Activated CD8-positive, alpha-beta T cell treated with anti-CD3 and anti-CD28 coated beads for 36 hours (primary cell): ENCODE measurements at regions of chr6 and their contacts with region 1.

Region 1: DNA sequence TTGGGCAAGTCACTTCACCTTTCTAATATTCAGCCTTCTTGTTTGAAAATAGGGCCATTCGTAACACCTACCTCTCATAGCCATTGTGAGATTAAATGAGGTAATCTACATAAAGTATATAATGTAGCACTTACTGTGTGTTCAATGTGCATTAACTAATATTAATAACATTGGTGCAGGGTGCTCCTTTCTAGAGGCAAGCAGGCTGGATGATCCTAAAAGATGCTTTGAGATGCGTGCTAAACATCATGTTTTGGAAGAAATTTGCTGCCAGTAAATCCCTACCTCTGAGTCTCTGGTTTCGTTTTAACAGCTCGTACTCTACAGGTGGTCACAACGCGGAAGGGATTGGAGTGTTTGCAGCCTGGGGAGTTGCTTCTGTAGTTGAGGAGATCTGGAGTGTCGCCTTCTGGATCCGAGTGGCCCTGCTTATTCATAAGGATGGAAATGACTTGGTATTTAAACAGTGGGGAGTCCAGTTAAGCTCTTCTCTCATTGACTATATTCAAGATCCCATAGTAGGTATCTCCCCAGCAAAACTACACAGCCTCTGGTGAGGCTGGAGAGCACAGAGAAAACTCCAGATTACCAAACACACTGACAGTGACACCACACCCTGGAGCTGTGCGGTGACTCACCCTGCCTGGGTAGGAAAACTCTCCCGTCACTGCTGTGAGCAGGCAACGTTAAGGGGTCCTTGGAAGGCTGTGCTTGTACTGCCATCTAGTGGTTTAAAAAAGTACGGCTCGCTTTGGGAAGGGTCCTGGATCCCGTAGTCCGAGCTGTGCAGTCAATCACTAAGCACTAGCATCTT is 107.9 kb downstream of the MAP3K7 start:
- DNase-seq: peak; percentile 90
- ATAC-seq: peak; percentile 90
- H3K4me3 Mint-ChIP-seq: no peak overlapping the region
- H3K27ac Mint-ChIP-seq: peak overlapping the region; percentile 66
- H3K4me1 Mint-ChIP-seq: peaks cover 52% of the 10 kb centered on the region
- H3K27me3 Mint-ChIP-seq: no peaks in the 10 kb centered on the region
- CTCF ChIP-seq: peak; percentile 97

Region 2: GRCh38 chr6:90296346-90297114 is 182.5 kb before region 1 on chr6 and contains the start of gene BACH2:
- CTCF ChIA-PET with region 1: interaction called, 231 read pairs
- POLR2A ChIA-PET with region 1: interaction called, 8 read pairs
- intact Hi-C with region 1: no loop called
- DNase-seq: peak; percentile 99
- ATAC-seq: peak; percentile 69
- H3K4me3 Mint-ChIP-seq: peak within 1 kb of the TSS; percentile 83
- H3K27ac Mint-ChIP-seq: peak within 1 kb of the TSS; percentile 94
- H3K4me1 Mint-ChIP-seq: peaks cover 38% of the 10 kb centered on the region
- H3K27me3 Mint-ChIP-seq: peaks cover 3% of the 10 kb centered on the region
- CTCF ChIP-seq: no peak
- total RNA-seq, gene BACH2: 60.7 to 66.9 TPM

Region 3: GRCh38 chr6:90386399-90387382 is 92.3 kb before region 1 on chr6:
- CTCF ChIA-PET with region 1: interaction called, 24 read pairs
- POLR2A ChIA-PET with region 1: interaction called, 5 read pairs
- intact Hi-C with region 1: no loop called
- DNase-seq: no peak
- ATAC-seq: no peak
- H3K4me3 Mint-ChIP-seq: no peak overlapping the region
- H3K27ac Mint-ChIP-seq: no peak overlapping the region
- H3K4me1 Mint-ChIP-seq: peaks cover 45% of the 10 kb centered on the region
- H3K27me3 Mint-ChIP-seq: no peaks in the 10 kb centered on the region
- CTCF ChIP-seq: no peak

Region 4: GRCh38 chr6:90413867-90414266 is 65.1 kb before region 1 on chr6:
- CTCF ChIA-PET with region 1: interaction called, 25 read pairs
- POLR2A ChIA-PET with region 1: interaction called, 10 read pairs
- intact Hi-C with region 1: no loop called
- DNase-seq: peak; percentile 95
- ATAC-seq: peak; percentile 77
- H3K4me3 Mint-ChIP-seq: peak overlapping the region; percentile 60
- H3K27ac Mint-ChIP-seq: peak overlapping the region; percentile 95
- H3K4me1 Mint-ChIP-seq: peaks cover 61% of the 10 kb centered on the region
- H3K27me3 Mint-ChIP-seq: no peaks in the 10 kb centered on the region
- CTCF ChIP-seq: no peak

Region 5: DNA sequence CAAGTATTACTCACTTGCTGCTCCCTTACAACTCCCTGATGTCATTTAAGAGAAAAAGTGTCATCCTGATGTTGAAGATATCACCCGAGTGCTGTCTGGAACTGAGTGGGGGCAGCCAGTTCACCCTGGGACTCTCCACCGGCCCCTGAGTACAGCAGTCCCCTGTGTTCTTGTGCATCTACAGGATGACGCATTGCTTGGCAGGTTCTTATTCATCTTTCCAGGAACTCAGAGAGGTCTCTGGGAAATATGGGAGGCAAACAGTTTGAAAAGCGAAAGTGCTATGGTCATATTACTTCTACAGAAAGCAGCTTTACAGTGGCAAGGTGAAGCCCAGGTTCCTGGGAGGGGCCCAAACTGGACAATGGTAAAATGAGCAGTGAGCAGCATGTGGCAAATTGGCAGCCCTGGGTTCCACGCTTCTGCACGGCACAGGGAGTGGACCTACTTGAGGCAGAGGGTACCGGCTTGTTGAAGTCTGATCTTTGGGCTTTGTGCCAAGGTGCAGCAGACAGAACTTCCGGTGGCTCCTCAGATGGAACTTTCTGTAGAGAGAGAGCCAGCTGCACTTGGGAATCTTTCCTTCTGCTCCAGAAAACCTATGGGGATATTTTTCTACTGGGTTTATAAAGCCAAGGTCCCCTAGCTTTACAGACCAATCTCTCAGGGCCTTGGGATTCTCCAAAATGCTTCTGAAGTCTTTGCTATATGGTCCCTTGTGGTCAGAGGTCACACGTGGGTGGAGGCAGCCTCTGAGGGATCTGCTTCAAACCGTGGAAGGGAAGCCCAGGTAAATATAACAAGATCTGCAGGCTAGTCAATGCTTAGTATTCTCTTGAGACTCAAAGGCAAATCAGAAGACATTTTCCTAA is 20.4 kb before region 1 on chr6:
- CTCF ChIA-PET with region 1: interaction called, 12 read pairs
- POLR2A ChIA-PET with region 1: interaction called, 22 read pairs
- intact Hi-C with region 1: no loop called
- DNase-seq: peak; percentile 93
- ATAC-seq: peak; percentile 95
- H3K4me3 Mint-ChIP-seq: peak overlapping the region; percentile 31
- H3K27ac Mint-ChIP-seq: peak overlapping the region; percentile 93
- H3K4me1 Mint-ChIP-seq: peaks cover 74% of the 10 kb centered on the region
- H3K27me3 Mint-ChIP-seq: no peaks in the 10 kb centered on the region
- CTCF ChIP-seq: no peak

Region 6: DNA sequence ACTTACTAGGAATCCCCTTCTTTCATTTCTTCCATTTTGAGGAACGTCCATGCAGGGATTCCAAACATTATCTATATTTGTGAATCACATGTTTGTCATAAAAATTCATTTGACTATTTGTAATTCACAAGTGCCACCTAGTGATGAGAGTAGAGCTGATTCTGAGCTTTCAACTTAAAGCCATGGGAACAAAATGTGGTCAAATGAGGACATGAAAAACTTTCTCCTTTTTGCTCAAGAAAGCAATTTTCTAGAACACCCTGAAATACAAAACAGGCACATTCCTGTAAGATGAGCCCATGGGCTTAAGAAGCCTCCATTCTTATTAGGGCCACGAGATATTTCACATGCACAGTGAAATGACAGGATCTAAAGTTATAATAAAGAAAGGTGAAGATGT is 95.6 kb after region 1 on chr6:
- CTCF ChIA-PET with region 1: no interaction called
- POLR2A ChIA-PET with region 1: no interaction called
- intact Hi-C with region 1: no loop called
- DNase-seq: no peak
- ATAC-seq: no peak
- H3K4me3 Mint-ChIP-seq: no peak overlapping the region
- H3K27ac Mint-ChIP-seq: no peak overlapping the region
- H3K4me1 Mint-ChIP-seq: peaks cover 19% of the 10 kb centered on the region
- H3K27me3 Mint-ChIP-seq: no peaks in the 10 kb centered on the region
- CTCF ChIP-seq: no peak

Region 7: DNA sequence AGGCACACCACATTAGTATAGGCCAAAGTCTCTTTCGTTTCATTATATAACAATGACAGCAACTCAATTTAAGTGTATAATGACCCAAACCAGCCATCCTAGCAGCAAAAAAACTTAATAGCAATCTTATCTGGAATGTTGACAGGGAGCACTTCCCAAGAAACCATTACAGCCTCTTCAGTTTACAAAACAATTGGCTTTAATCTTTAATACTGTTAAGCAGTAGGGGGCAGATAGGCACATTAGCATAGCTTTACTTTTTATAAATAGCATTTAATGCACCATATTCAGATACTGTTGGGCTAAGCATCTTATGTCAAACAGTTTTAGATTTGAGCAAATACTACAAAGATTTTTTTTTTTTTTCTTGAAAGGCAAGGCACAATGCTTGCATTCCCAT is 301.1 kb after region 1 on chr6:
- CTCF ChIA-PET with region 1: no interaction called
- POLR2A ChIA-PET with region 1: no interaction called
- intact Hi-C with region 1: no loop called
- DNase-seq: no peak
- ATAC-seq: no peak
- H3K4me3 Mint-ChIP-seq: no peak overlapping the region
- H3K27ac Mint-ChIP-seq: no peak overlapping the region
- H3K4me1 Mint-ChIP-seq: no peaks in the 10 kb centered on the region
- H3K27me3 Mint-ChIP-seq: peaks cover 9% of the 10 kb centered on the region
- CTCF ChIP-seq: no peak